Upper lobe of right lung (tissue), 1 donor: ENCODE measurements at regions of chr3 and their contacts with region 1.

Region 1: DNA sequence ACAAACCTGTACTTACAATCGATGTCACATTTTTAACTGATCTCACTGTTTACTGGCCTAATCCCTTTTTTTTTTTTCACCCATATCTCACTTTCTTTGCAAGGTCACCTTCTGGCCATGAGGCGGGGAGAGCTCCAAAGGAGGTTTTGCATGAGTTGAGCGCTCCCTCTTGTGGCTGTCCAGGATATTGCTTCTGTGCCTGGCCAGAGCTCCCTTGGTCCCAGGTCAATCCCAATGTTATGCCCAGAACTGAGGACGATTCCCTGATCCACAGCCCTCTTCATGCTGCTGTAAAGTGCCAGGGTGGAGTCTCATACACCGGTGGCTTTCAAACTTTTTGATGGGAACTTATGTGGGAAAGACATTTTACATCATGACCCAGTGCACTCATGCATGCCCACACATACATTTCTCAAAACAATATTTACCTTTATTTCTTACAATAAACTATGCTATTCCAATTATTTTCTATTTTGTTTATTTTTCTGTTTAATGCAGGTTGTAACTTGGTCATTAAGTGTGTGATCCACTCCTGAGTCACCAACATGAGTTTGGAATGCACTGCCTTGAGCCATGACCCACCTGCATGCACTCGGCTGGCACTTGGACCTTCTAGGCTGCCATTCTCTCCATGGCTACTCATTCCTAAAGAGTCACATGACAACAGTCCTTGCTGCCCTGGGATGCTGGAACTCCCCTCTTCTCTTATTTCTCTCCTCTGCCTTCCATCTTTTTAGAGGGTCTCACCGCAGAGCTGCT is 9.6 kb upstream of the SST start:
- DNase-seq: peak; percentile 77
- ATAC-seq: peak; percentile 97
- H3K4me3 ChIP-seq: no peak overlapping the region
- H3K27ac ChIP-seq: no peak overlapping the region
- H3K4me1 ChIP-seq: no peaks in the 10 kb centered on the region
- H3K27me3 ChIP-seq: peaks cover 12% of the 10 kb centered on the region
- CTCF ChIP-seq: peak; percentile 93

Region 2: GRCh38 chr3:187319699-187320302 is 360.0 kb before region 1 on chr3:
- intact Hi-C with region 1: loop called (anchors 5 kb)
- DNase-seq: peak; percentile 69
- ATAC-seq: peak; percentile 98
- H3K4me3 ChIP-seq: no peak overlapping the region
- H3K27ac ChIP-seq: no peak overlapping the region
- H3K4me1 ChIP-seq: peaks cover 12% of the 10 kb centered on the region
- H3K27me3 ChIP-seq: no peaks in the 10 kb centered on the region
- CTCF ChIP-seq: peak; percentile 87